Activated naive CD4-positive, alpha-beta T cell treated with anti-CD3 and anti-CD28 coated beads for 36 hours (primary cell): ENCODE measurements at regions of chr18 and their contacts with region 1.

Region 1: GRCh38 chr18:70781860-70782453 is 493.1 kb downstream of the SOCS6 start:
- DNase-seq: peak; percentile 85
- H3K4me3 Mint-ChIP-seq: no peak overlapping the region
- H3K27ac Mint-ChIP-seq: no peak overlapping the region
- H3K4me1 Mint-ChIP-seq: peaks cover 20% of the 10 kb centered on the region
- H3K27me3 Mint-ChIP-seq: no peaks in the 10 kb centered on the region

Region 2: DNA sequence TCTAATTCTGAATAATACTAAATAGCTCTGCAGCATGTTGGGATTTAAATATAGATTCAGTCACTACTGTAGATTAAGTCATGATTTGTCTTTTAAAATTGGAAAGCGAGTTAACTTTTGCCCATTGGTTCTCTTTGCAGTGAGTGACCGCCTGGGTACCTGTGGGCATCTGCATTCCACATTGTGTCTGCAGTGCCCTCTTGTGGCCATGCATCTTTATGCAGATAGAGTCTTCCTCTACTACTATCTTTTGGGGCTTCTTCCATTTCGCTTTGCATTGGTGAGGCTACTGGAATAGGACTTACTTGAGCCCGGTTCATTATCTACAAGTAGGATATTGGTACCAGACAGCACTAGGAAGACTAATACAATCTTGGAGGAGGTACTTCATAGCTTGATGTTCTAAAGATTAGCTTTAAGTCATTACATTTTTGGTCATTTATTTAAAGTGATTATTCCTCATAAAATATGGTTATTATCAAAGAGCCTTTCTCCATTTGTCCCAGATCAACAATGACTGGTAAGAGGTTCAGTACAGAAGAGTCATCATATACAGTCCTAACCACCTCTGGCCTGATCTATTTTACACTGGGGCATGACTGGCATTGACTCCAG is 290.1 kb before region 1 on chr18:
- CTCF ChIA-PET with region 1: interaction called, 4 read pairs
- intact Hi-C with region 1: loop called (anchors 2 kb)
- DNase-seq: peak; percentile 71
- H3K4me3 Mint-ChIP-seq: no peak overlapping the region
- H3K27ac Mint-ChIP-seq: no peak overlapping the region
- H3K4me1 Mint-ChIP-seq: peaks cover 2% of the 10 kb centered on the region
- H3K27me3 Mint-ChIP-seq: peaks cover 2% of the 10 kb centered on the region

Region 3: DNA sequence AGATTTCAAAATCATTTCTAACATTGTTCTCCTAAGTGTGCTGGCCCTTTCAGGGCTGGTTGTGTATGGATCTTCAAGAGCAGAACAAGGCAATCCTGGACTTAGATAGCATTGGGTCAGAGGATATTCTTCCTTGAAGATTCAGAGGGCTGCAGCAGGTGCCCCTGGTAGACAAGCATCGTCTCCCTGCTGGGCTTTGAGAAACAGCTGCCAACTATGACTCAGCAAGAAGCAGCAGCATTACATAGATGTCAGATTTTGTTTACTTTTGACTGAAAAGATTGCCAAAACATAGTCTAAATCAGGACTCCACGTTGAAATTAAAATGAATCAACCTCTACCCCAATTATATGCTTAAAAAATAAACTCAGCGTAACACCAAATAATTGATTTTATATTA is 125.7 kb after region 1 on chr18:
- CTCF ChIA-PET with region 1: no interaction called
- intact Hi-C with region 1: no loop called
- DNase-seq: no peak
- H3K4me3 Mint-ChIP-seq: no peak overlapping the region
- H3K27ac Mint-ChIP-seq: no peak overlapping the region
- H3K4me1 Mint-ChIP-seq: peaks cover 13% of the 10 kb centered on the region
- H3K27me3 Mint-ChIP-seq: no peaks in the 10 kb centered on the region

Region 4: GRCh38 chr18:70931942-70932814 is 150.2 kb after region 1 on chr18:
- CTCF ChIA-PET with region 1: no interaction called
- intact Hi-C with region 1: loop called (anchors 5 kb)
- DNase-seq: no peak
- H3K4me3 Mint-ChIP-seq: no peak overlapping the region
- H3K27ac Mint-ChIP-seq: no peak overlapping the region
- H3K4me1 Mint-ChIP-seq: peaks cover 6% of the 10 kb centered on the region
- H3K27me3 Mint-ChIP-seq: no peaks in the 10 kb centered on the region

Region 5: DNA sequence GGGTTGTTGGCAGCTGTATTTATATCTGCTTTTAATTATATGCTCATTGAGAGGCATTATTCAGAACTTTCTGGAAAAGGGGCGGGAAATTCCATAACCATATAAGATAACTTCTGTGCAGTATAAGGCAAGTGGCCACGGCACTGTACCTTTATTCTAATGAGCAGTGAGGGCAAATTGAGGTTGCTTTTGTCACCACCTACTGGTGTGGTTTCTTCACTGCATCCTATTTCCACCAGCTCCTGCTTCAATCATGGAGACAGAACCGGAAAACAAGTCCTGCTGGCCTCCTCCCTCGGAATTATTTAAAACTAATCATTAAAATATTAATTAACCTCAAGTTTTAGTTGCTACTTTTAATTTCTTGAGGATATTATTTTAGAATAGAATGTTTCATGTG is 1002.8 kb after region 1 on chr18:
- CTCF ChIA-PET with region 1: no interaction called
- intact Hi-C with region 1: loop called (anchors 2 kb)
- DNase-seq: peak; percentile 26
- H3K4me3 Mint-ChIP-seq: no peak overlapping the region
- H3K27ac Mint-ChIP-seq: no peak overlapping the region
- H3K4me1 Mint-ChIP-seq: no peaks in the 10 kb centered on the region
- H3K27me3 Mint-ChIP-seq: no peaks in the 10 kb centered on the region

Region 6: DNA sequence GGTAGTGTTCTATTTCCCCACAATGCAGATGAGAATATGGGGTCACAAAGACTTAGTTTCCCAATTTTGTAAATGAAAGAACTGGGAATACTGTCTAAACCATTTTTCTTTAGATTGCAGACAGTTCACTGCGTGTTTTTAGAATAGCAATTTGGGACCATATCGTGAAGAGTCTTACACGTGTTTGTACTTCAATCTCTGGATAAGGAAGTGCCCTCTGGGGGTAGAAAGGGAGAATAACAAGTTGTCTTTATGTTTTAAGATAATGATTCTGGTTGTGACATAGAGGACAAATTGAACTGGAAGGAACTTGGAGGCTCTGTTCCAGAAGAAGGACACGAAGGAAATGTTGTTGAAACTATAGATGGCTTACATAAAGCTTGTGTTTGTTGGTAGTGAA is 1304.5 kb after region 1 on chr18:
- CTCF ChIA-PET with region 1: no interaction called
- intact Hi-C with region 1: loop called (anchors 5 kb)
- DNase-seq: no peak
- H3K4me3 Mint-ChIP-seq: no peak overlapping the region
- H3K27ac Mint-ChIP-seq: no peak overlapping the region
- H3K4me1 Mint-ChIP-seq: peaks cover 2% of the 10 kb centered on the region
- H3K27me3 Mint-ChIP-seq: peaks cover 4% of the 10 kb centered on the region

Region 7: GRCh38 chr18:72544092-72544886 is 1762.3 kb after region 1 on chr18 and contains the start of gene CBLN2:
- CTCF ChIA-PET with region 1: no interaction called
- intact Hi-C with region 1: loop called (anchors 1 kb)
- DNase-seq: peak; percentile 55
- H3K4me3 Mint-ChIP-seq: no peak within 1 kb of the TSS
- H3K27ac Mint-ChIP-seq: no peak within 1 kb of the TSS
- H3K4me1 Mint-ChIP-seq: peaks cover 11% of the 10 kb centered on the region
- H3K27me3 Mint-ChIP-seq: peaks cover 38% of the 10 kb centered on the region
- total RNA-seq, gene CBLN2: not detected

Region 8: DNA sequence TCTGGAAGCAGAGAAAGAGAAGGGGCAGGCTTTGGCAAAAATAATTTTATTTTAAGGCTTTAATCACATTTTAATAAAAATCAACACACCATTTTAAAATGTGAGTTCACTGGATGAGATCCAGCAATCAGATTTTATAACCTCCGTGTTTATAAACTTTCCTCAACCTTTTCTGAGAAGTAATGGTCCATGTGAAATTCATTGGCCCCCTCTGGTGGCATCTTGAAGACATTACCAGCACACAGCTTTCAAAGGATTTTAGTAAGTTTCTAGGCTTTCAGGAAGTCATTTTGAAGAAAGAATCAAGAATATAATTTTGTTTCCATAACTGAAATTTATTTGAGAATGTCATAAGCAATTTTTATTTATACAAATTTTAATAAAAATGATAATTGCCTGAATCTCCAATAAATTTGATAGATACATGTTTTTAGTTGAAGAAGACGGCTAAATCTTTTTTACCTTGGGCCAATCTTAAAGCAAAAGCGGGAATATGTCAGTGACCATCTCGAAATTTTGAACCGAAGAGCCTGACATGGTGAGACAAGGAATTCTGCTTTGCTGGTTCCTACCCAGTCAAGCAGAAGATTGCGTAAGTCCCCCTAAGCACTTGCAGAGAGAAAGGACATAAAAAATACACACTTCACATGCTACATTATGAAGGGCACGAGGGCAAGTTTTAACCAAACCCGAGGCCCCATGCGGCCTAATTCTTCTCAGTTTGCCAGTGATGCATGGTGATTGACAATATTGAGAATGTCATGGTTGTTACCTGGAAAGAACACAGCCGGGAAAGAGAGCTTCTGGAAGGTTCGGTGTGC is 1890.6 kb after region 1 on chr18:
- CTCF ChIA-PET with region 1: no interaction called
- intact Hi-C with region 1: loop called (anchors 2 kb)
- DNase-seq: peak; percentile 15
- H3K4me3 Mint-ChIP-seq: no peak overlapping the region
- H3K27ac Mint-ChIP-seq: no peak overlapping the region
- H3K4me1 Mint-ChIP-seq: no peaks in the 10 kb centered on the region
- H3K27me3 Mint-ChIP-seq: peaks cover 10% of the 10 kb centered on the region